ENCODE measurements at regions of chr7 and their contacts with region 1.

Region 1: DNA sequence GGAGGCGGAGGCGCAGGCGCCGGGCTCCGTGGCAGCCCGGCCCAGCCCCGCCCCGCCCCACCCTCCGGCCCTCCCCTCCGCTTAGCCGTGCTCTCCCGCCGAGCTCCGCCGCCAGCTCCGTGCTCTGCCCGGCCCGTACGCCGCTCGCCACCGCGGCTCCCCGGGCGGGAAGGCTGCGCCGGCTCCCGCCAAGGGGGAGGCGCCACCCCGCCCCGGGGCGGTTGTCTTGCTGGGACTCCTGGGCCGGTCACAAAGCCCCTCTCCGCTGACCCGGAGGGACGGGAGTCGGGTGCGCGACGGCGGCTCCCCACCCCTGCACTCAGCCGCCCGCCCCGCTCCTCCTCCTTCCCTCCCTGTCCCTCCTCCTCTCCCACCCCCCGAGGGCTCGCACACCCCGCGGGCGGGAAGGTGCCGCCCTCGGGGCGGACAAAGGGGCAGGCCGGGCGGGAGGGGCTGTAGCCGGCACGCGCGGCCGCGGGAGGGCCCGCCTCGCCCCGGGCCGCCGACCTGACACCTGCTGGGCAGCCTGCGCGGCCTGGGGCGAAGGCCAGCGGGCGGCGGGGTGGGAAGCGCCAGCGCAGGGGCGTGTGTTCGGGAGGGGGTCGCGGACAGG is 11.5 kb upstream of the SP8 start:
- DNase-seq: no peak
- H3K4me3 Mint-ChIP-seq: no peak overlapping the region
- H3K27ac Mint-ChIP-seq: no peak overlapping the region
- H3K4me1 Mint-ChIP-seq: peaks cover 13% of the 10 kb centered on the region
- H3K27me3 Mint-ChIP-seq: peaks cover 58% of the 10 kb centered on the region

Region 2: GRCh38 chr7:19146699-19147098 is 1651.5 kb before region 1 on chr7:
- intact Hi-C with region 1: loop called (anchors 10 kb)
- DNase-seq: no peak
- H3K4me3 Mint-ChIP-seq: no peak overlapping the region
- H3K27ac Mint-ChIP-seq: no peak overlapping the region
- H3K4me1 Mint-ChIP-seq: no peaks in the 10 kb centered on the region
- H3K27me3 Mint-ChIP-seq: peaks cover 43% of the 10 kb centered on the region

Region 3: DNA sequence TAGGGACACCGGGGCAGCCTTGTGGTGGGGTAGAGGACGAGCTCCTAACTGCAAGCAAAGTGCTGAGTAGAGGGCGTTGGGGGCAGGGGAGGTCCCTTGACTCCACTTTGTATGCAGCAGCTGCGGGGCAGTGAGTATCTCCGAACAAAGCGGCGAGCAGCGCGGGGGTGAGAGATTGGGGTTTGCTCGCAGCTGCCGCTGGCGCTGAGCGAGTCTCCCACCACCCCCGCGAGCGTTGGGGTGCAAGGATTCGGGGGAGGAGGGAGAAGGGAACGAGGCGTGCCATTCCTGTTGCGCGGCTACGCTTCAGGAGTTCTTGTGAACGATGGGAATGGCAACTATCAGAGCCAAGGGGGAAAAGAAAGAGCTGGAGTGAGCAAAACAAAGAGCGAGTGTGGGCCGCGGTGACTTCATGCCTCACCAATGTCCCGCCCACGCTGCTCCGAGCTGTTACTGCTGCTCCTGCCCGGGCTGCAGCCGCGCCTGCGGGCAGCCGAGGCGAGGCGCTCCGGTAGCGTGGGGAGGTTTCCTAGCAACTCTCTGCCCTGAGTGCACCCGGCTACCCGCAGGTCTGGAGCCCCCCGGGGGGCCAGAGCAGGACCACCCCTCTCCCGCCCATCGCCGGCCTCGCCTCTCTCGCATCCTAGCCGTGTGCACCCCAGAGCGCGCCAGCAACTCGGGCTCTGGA is 467.8 kb before region 1 on chr7 and contains the start of gene ITGB8:
- intact Hi-C with region 1: loop called (anchors 5 kb)
- DNase-seq: peak; percentile 23
- H3K4me3 Mint-ChIP-seq: peak within 1 kb of the TSS; percentile 77
- H3K27ac Mint-ChIP-seq: peak within 1 kb of the TSS; percentile 28
- H3K4me1 Mint-ChIP-seq: peaks cover 20% of the 10 kb centered on the region
- H3K27me3 Mint-ChIP-seq: peaks cover 63% of the 10 kb centered on the region
- total RNA-seq, gene ITGB8: 0.05 TPM in 1 of 2 replicates, not detected in the other

Region 4: GRCh38 chr7:20786779-20787659 is 11.2 kb before region 1 on chr7 and contains the start of gene SP8:
- intact Hi-C with region 1: loop called (anchors 1 kb)
- DNase-seq: no peak
- H3K4me3 Mint-ChIP-seq: peak within 1 kb of the TSS; percentile 38
- H3K27ac Mint-ChIP-seq: peak within 1 kb of the TSS; percentile 59
- H3K4me1 Mint-ChIP-seq: peaks cover 15% of the 10 kb centered on the region
- H3K27me3 Mint-ChIP-seq: peaks cover 74% of the 10 kb centered on the region
- total RNA-seq, gene SP8: not detected in 2 replicates

Region 5: DNA sequence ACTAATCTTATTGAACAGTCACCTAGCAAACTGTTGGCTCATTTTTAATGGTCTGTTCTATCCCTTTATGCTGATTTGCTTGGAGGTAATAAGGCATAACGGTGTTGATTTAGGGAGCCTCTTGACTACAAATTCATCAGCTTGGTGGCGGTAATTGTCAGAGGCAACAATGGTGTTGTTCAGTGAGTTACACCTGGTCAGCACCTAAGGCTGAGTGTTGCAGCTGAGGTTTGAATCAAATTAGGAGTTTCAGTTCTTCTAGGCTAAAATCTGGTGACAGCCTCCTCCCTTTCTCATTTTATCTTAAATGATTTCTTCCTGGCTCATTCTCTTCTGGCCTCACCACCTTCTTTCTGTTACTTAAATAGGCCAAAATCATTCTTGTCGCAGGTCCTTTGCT is 30.8 kb after region 1 on chr7:
- intact Hi-C with region 1: no loop called
- DNase-seq: no peak
- H3K4me3 Mint-ChIP-seq: no peak overlapping the region
- H3K27ac Mint-ChIP-seq: no peak overlapping the region
- H3K4me1 Mint-ChIP-seq: no peaks in the 10 kb centered on the region
- H3K27me3 Mint-ChIP-seq: no peaks in the 10 kb centered on the region